ENCODE measurements at regions of chr10 and their contacts with region 1.

Region 1: DNA sequence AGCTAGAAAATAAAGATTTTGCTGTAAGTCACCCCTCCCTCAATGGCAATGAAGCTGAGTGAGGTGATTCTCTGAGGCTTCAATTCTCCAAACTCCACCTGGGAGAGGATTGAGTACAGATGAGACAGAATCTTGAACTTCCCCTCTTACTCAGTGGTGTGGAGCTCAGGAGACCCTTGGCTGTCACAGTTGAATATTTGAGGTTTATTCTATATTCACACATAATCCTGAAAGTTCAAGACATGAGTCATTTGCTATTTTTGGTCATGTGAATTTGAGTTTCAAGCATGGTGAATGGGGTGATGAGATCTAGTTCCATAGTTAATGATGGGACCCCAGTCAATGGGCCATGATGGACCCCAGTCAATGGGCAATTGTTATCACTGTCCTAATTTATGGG is 13.9 kb upstream of the TECTB start:
- DNase-seq: no peak
- ATAC-seq: no peak
- H3K4me3 ChIP-seq: no peak overlapping the region
- H3K27ac ChIP-seq: no peak overlapping the region
- H3K4me1 ChIP-seq: no peaks in the 10 kb centered on the region
- H3K27me3 ChIP-seq: no peaks in the 10 kb centered on the region

Region 2: GRCh38 chr10:112209684-112210131 is 59.6 kb before region 1 on chr10:
- intact Hi-C with region 1: loop called in 1 of 2 experiments (anchors 5 kb)
- DNase-seq: no peak
- ATAC-seq: no peak
- H3K4me3 ChIP-seq: no peak overlapping the region
- H3K27ac ChIP-seq: peak overlapping the region in 1 of 2 donors; percentile 73
- H3K4me1 ChIP-seq: peaks cover 7 to 9% of the 10 kb centered on the region in 2 donors
- H3K27me3 ChIP-seq: no peaks in the 10 kb centered on the region